ENCODE measurements at regions of chr2 and their contacts with region 1.

Region 1: DNA sequence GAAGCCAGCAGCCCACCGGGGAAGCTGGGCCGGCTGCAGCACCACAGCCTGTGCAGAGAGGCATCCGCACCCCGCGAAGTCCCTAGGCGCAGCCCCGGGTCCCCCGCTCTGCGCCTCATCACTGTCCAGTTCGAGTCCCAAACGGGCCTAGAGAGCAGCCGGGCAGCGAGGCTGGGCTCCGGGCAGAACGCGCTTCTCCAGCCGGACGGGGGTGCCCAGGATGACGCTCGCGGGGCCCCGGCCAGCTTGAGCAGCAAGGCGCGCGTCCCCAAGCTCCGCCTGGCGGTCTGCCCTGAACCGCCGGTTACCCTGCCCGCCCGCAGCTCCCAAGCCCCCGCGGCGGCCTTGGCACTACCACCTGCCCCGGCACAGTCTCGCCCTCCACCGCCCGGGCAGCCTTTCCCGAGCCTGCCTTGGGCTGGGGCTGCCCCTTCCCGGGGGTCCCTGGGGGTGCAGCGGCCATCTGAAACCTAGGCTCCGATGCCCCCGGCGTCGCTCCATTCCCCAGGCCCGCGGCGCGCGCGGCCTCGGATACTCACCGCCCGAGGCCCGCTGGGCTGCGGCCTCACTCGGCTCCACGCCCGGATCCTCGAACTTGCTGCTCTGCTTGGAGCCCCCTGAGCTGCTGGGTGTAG is 591 bp downstream of the SLC16A14 start:
- DNase-seq: peak; percentile 57
- H3K4me3 Mint-ChIP-seq: peak overlapping the region; percentile 81
- H3K27ac Mint-ChIP-seq: no peak overlapping the region
- H3K4me1 Mint-ChIP-seq: peaks cover 11% of the 10 kb centered on the region
- H3K27me3 Mint-ChIP-seq: peaks cover 12% of the 10 kb centered on the region

Region 2: GRCh38 chr2:229501051-229501794 is 566.9 kb before region 1 on chr2:
- CTCF ChIA-PET with region 1: no interaction called
- intact Hi-C with region 1: no loop called
- DNase-seq: no peak
- H3K4me3 Mint-ChIP-seq: no peak overlapping the region
- H3K27ac Mint-ChIP-seq: no peak overlapping the region
- H3K4me1 Mint-ChIP-seq: no peaks in the 10 kb centered on the region
- H3K27me3 Mint-ChIP-seq: peaks cover 6% of the 10 kb centered on the region

Region 3: DNA sequence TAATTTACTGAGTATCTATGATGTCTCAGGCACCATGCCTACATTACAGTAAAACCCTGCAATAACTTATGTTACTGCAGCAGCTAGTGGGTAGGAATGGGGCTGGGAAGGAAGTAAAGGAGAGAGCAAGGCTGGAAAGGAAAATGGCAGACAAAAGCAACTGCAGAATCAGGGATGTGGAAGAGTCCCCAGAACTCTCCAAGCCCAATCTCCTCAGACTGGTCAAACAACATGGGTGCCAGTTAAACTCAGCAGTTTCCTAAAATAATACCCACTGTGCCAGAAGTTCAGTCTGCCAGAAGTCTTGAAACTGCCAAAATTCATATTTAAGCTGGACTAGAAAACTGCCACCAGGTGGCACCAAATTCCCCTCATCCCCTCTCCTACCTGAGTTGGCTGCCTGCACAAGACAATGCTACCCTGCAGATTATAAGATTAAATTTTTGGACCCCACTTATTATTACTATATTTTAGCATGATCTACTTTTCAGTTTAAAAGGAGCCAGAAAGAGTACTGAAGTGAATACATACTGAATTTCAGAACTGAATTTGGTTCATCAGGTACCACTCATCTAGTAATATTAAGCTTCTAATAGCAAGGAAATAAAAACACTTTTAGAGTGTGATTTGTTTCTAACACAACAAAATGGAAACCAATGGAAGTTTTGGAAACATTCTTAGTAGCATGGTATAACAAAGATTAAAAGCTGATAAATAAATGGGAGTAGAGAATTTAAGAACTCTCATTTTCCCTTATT is 267.0 kb before region 1 on chr2:
- CTCF ChIA-PET with region 1: interaction called, 3 read pairs
- intact Hi-C with region 1: loop called (anchors 1 kb)
- DNase-seq: peak; percentile 88
- H3K4me3 Mint-ChIP-seq: no peak overlapping the region
- H3K27ac Mint-ChIP-seq: no peak overlapping the region
- H3K4me1 Mint-ChIP-seq: no peaks in the 10 kb centered on the region
- H3K27me3 Mint-ChIP-seq: no peaks in the 10 kb centered on the region

Region 4: DNA sequence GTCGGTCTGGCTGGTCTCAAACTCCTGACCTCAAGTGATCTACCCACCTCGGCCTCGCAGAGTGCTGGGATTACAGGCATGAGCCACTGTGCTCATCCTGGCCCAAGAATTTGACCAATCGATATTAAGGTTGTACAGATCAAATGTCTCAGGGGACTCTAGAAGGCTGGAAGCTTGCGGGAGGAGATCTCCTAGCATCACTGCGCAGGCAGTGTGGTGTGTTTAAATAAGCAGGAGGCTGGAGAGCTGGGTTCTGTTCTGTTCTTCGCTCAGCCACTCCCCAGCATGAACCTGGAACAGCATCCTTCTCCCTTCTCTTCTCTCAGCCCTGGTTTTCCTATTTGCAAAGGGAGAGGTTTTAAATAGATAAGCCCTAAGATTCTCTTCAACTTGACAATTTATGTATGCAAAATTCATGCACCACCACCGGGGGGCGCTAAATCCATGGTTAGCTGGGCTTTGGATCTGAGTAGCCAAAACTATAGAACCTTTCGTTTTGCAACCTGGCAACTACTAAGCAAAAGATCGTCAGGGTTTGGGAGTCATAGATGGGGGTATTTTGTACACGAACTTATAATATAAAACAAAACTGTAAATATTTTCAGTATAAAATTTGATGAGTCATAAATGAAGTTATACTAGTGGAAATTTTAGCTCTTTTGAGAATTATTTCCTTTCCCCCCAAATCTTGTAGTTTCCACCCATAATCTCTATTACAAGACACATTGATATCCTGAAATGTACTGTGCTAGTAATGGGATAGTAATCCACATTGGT is 60.0 kb before region 1 on chr2:
- CTCF ChIA-PET with region 1: interaction called, 15 read pairs
- intact Hi-C with region 1: loop called (anchors 1 kb)
- DNase-seq: peak; percentile 95
- H3K4me3 Mint-ChIP-seq: no peak overlapping the region
- H3K27ac Mint-ChIP-seq: no peak overlapping the region
- H3K4me1 Mint-ChIP-seq: peaks cover 5% of the 10 kb centered on the region
- H3K27me3 Mint-ChIP-seq: no peaks in the 10 kb centered on the region

Region 5: GRCh38 chr2:230219419-230220331 is 151.5 kb after region 1 on chr2 and contains the start of gene SP110:
- CTCF ChIA-PET with region 1: no interaction called
- intact Hi-C with region 1: loop called (anchors 5 kb)
- DNase-seq: peak; percentile 91
- H3K4me3 Mint-ChIP-seq: peak within 1 kb of the TSS; percentile 99
- H3K27ac Mint-ChIP-seq: peak within 1 kb of the TSS; percentile 99
- H3K4me1 Mint-ChIP-seq: peaks cover 62% of the 10 kb centered on the region
- H3K27me3 Mint-ChIP-seq: no peaks in the 10 kb centered on the region
- total RNA-seq, gene SP110: 85.3 to 88.8 TPM

Region 6: DNA sequence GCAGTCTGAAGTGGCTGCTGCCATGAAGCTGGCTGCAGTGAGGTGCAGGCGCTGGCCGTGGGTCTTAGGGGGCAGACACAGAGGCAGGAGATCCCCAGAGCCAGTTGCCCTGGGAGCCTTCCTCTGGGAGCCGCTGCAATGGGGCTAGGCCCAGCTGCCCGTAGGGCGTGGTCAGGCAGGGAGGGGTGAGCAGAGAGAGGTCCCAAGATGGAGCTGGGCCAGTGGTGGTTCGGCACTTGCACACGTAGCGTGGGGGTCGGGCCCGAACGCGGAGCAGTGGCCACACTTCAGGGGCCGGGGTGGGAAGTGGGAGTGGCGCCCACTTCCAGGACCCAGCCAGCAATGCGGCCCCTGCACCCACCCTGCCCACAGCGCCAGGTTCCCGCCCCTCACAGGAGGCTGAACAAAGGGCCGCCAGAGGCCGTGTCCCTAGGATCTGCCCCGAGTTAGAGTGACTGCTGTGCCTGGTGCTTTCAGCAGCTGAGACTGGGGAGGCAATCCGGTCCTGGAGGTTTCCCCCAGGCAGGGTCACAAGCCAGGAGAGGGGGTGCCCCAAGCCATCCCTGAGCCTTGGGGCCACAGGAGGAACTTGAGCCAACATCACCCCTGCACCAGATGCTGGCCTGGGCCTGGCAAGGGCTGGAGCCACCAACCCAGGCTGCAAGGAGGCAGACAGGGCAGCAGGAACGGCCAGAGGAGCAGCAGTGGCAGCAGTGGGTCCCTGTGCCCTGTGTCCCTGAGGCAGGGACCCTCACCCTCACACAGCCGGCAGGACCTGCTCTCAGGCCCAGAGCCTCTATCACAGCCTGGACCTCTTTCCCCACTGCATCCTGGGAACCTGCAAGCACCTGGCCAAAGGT is 237.5 kb after region 1 on chr2:
- CTCF ChIA-PET with region 1: no interaction called
- intact Hi-C with region 1: no loop called
- DNase-seq: no peak
- H3K4me3 Mint-ChIP-seq: no peak overlapping the region
- H3K27ac Mint-ChIP-seq: no peak overlapping the region
- H3K4me1 Mint-ChIP-seq: no peaks in the 10 kb centered on the region
- H3K27me3 Mint-ChIP-seq: no peaks in the 10 kb centered on the region

Region 7: DNA sequence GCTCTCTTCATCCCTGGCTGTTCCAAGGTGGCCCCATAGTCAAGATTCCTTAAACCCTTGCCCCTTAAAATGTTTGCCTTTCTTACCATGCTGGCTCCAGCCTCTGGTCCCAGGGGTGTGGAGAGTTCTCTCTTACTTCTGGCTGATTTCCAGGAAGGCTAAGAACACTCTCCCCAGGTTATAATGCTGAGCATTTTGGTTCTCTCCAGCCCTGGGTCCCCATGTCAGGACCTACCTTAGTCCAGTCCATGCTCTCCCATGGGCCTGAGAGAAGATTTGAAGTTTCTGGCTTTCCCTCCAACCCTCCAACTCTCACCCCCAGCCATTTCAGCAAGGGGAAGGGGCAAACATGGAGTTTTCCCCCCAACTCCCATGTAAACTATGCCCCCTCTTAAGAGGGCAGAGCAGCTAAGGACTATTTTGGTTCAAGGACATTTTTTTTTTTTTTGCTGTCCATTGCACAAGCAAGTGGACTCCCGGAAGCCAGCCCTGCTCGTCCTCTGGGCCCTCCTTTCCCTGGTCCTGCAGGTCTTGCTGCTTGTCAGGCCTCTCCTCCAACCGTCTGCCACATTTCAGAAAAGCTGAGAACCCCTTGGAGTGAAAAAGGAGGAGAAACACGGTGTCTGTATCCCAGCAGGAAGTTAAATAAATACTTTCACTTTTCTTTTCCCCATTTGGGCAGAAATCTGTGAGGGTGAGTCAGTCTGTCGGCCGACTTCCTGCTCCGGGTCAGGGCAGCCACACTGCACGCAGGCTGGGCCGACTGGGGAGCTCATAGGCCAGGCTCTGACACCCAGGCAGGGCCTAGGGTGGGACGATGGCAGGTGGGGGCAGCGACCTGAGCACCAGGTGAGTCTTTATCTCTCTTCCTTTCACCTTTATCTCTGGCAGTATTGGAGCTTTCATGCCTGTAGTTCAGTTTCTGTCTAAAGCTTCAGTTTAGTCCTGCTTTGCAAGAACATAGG is 258.6 kb after region 1 on chr2 and contains the start of gene SP140L:
- CTCF ChIA-PET with region 1: no interaction called
- intact Hi-C with region 1: no loop called
- DNase-seq: peak; percentile 88
- H3K4me3 Mint-ChIP-seq: peak within 1 kb of the TSS; percentile 96
- H3K27ac Mint-ChIP-seq: peak within 1 kb of the TSS; percentile 99
- H3K4me1 Mint-ChIP-seq: peaks cover 60% of the 10 kb centered on the region
- H3K27me3 Mint-ChIP-seq: no peaks in the 10 kb centered on the region
- total RNA-seq, gene SP140L: 41.8 to 44.7 TPM

Region 8: DNA sequence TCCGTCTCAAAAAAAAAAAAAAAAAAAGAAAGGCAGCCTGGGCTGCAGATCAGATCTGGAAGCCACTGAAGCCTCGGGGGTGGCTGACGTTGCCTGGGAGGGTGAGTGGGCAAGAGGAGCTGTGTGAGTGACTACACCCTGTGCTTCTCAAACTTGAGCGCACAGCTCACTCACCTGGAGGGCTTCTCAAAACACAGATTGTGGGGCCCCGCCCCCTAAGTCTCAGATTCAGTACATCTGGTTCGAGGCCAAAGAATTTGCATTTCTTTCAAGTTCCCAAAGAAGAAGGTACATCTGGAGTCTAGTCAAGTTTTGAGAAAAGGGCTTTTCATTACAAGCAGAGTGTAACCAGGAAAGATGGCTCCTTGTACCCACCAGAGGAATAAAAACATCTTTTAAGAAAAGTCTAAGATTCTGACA is 546.8 kb after region 1 on chr2:
- CTCF ChIA-PET with region 1: interaction called, 6 read pairs
- intact Hi-C with region 1: loop called (anchors 1 kb)
- DNase-seq: peak; percentile 79
- H3K4me3 Mint-ChIP-seq: no peak overlapping the region
- H3K27ac Mint-ChIP-seq: peak overlapping the region; percentile 71
- H3K4me1 Mint-ChIP-seq: peaks cover 33% of the 10 kb centered on the region
- H3K27me3 Mint-ChIP-seq: no peaks in the 10 kb centered on the region

Measured in activated naive CD4-positive, alpha-beta T cell treated with anti-CD3 and anti-CD28 coated beads for 36 hours (primary cell).